CD8-positive, alpha-beta T cell (primary cell): ENCODE measurements at regions of chr6 and their contacts with region 1.

Region 1: GRCh38 chr6:32118782-32119628 is 9.0 kb downstream of the ATF6B start:
- DNase-seq: peak; percentile 46 to 80 (median 70)
- ATAC-seq: peak; percentile 86
- H3K4me3 ChIP-seq: no peak overlapping the region
- H3K4me3 Mint-ChIP-seq: no peak overlapping the region
- H3K27ac ChIP-seq: no peak overlapping the region
- H3K27ac Mint-ChIP-seq: peak overlapping the region; percentile 62
- H3K4me1 ChIP-seq: no peaks in the 10 kb centered on the region
- H3K4me1 Mint-ChIP-seq: peaks cover 8% of the 10 kb centered on the region
- H3K27me3 ChIP-seq: no peaks in the 10 kb centered on the region
- H3K27me3 Mint-ChIP-seq: no peaks in the 10 kb centered on the region
- CTCF ChIP-seq: peak; percentile 79

Region 2: DNA sequence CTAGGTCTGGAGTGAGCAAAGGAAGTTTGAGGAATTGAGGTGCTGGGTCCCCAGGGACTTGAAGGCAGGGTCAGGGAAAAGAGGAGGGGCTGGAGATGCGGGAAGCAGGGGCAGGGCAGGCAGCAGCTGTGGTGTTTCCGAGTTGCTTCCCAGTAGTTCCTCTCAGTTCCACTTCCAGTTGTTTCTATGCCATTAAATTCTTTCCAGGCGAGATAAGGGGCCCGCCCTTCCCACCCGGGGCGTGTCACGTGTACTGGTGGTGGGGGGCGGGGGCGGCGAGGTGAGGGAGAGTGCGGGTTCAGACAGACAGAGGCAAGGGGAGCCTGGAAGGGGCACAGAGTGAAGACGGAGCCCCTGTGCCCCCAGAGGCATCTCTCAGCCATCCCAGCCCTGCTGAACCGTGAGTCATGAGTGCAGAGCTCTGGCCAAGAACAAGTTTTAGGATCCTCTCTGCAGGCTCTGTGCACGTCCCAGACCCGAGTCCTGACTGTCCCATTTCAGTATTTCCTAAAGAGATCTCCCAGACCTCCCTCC is 10.8 kb before region 1 on chr6:
- CTCF ChIA-PET with region 1: interaction called, 18 read pairs
- POLR2A ChIA-PET with region 1: interaction called, 3 read pairs
- intact Hi-C with region 1: no loop called
- DNase-seq: no peak
- ATAC-seq: no peak
- H3K4me3 ChIP-seq: no peak overlapping the region
- H3K4me3 Mint-ChIP-seq: no peak overlapping the region
- H3K27ac ChIP-seq: no peak overlapping the region
- H3K27ac Mint-ChIP-seq: no peak overlapping the region
- H3K4me1 ChIP-seq: peaks cover 20% of the 10 kb centered on the region
- H3K4me1 Mint-ChIP-seq: peaks cover 26% of the 10 kb centered on the region
- H3K27me3 ChIP-seq: peaks cover 0 to 7% of the 10 kb centered on the region in 2 experiments
- H3K27me3 Mint-ChIP-seq: peaks cover 22% of the 10 kb centered on the region
- CTCF ChIP-seq: no peak

Region 3: GRCh38 chr6:32234934-32235333 is 115.9 kb after region 1 on chr6:
- CTCF ChIA-PET with region 1: interaction called, 3 read pairs
- POLR2A ChIA-PET with region 1: no interaction called
- intact Hi-C with region 1: loop called in 1 of 2 experiments (anchors 1 kb)
- DNase-seq: peak in 2 of 9 experiments; percentile 21 to 40
- ATAC-seq: no peak
- H3K4me3 ChIP-seq: no peak overlapping the region
- H3K4me3 Mint-ChIP-seq: no peak overlapping the region
- H3K27ac ChIP-seq: no peak overlapping the region
- H3K27ac Mint-ChIP-seq: no peak overlapping the region
- H3K4me1 ChIP-seq: no peaks in the 10 kb centered on the region
- H3K4me1 Mint-ChIP-seq: peaks cover 2% of the 10 kb centered on the region
- H3K27me3 ChIP-seq: no peaks in the 10 kb centered on the region
- H3K27me3 Mint-ChIP-seq: no peaks in the 10 kb centered on the region
- CTCF ChIP-seq: no peak